ENCODE measurements at regions of chr7 and their contacts with region 1.

Region 1: DNA sequence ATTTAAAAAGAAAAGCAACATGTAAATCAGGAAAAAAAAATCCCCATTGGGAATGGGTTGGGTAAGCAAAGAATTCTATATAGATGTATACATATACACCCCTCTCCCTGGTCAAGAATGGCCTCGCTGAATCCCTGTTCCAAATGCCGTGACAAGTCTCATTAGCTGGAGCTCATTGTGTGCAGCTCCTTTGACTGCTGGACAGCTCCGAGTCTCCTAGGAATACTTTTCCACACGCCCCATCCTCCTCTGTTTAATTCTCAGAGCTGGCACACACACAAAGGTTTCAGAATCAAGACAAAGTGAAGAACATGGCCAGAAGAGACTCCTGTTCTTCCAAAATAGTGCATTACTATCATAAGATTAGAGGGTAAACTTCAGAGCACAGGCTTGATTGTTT is 130.9 kb upstream of the MKLN1 start:
- DNase-seq: no peak
- ATAC-seq: no peak
- H3K4me3 ChIP-seq: no peak overlapping the region
- H3K27ac ChIP-seq: no peak overlapping the region
- H3K4me1 ChIP-seq: no peaks in the 10 kb centered on the region
- H3K27me3 ChIP-seq: no peaks in the 10 kb centered on the region
- CTCF ChIP-seq: no peak

Region 2: DNA sequence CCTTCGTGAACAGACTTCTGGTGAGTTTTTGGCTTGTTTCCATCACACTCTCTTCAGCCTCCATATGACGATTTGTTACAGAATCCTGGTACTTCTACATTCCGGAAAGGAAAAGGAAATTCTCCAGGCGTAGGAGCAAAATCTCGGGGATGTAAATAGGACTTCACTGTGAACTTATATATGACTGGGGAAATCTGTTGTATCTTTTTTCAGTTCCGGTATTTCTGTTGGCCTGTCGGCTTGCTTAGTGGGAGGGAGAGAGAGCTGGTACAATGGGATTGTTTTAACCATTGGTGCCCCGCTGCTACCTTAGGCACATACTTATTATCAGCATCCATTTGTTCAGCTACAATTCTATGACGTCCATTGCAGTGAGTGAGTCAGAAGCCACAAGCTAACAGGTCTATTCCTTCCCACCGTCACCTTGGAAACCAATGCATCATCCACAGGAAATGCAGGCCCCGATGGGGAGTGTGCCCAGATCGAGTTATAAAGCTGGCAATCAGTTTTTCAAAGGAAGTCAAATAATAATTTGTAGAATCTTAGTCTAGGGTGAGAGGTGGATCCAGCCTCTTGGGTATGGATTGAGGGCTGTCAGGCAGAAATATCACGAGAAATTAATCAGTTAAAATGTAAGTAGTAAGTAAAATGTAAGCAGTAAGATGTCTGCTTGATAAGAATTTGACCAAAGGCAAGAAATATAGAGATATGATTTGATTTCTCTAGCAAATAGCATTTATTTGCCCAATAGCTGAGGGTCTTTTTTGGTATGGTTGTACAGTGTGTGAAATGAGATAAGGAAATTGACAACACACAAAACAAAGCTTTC is 38.9 kb after region 1 on chr7:
- intact Hi-C with region 1: loop called in 1 of 2 experiments (anchors 5 kb)
- DNase-seq: no peak
- ATAC-seq: peak in 3 of 4 donors; percentile 34 to 78 (median 42)
- H3K4me3 ChIP-seq: peak overlapping the region; percentile 15
- H3K27ac ChIP-seq: no peak overlapping the region
- H3K4me1 ChIP-seq: peaks cover 11% of the 10 kb centered on the region
- H3K27me3 ChIP-seq: no peaks in the 10 kb centered on the region
- CTCF ChIP-seq: no peak

Region 3: GRCh38 chr7:131293018-131293417 is 96.2 kb after region 1 on chr7:
- intact Hi-C with region 1: loop called in 1 of 2 experiments (anchors 10 kb)
- DNase-seq: peak; percentile 45 to 71
- ATAC-seq: peak; percentile 42 to 75 (median 64)
- H3K4me3 ChIP-seq: no peak overlapping the region
- H3K27ac ChIP-seq: no peak overlapping the region
- H3K4me1 ChIP-seq: no peaks in the 10 kb centered on the region
- H3K27me3 ChIP-seq: no peaks in the 10 kb centered on the region
- CTCF ChIP-seq: no peak

Region 4: DNA sequence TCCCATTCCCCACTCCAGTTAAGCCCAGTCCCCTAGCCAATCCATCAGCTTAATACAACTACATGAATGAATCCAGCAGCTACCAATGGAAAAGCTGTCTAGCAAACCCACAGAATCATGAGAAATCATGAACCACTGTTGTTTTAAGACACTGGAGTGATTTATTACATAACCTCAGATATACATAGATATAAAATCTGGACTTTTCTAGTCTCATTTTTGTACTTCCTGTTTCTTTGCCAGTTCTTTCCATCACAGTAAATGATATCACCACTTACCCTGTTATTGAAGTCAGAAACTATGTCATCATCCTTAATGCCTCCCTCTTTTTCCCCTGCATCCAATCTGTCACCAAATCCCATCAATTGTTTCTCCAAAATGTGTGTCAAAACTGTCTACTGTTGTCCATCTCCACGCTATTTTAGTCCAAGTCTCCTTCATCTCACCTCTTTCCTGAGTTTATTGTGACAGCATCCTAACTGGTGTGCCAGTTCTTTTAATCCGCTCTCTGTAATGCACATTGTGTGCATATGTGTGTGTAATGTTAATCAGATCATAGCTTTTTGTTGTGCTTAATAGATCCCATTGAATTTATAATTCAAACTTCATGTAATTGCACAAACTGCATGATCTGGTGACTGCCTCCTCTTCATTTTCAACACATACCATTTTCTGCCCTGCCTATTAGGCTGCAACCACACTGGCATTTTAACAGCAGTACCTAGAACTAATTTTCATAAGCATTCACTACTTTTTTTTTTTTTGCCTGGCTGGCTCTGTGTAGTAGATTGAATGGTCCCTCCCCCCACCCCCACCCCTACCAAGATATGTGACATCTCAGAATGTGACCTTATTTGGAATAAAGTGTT is 186.8 kb after region 1 on chr7:
- intact Hi-C with region 1: no loop called
- DNase-seq: no peak
- ATAC-seq: no peak
- H3K4me3 ChIP-seq: no peak overlapping the region
- H3K27ac ChIP-seq: no peak overlapping the region
- H3K4me1 ChIP-seq: peaks cover 17% of the 10 kb centered on the region
- H3K27me3 ChIP-seq: no peaks in the 10 kb centered on the region
- CTCF ChIP-seq: no peak